Heart left ventricle (tissue), 16 donors: ENCODE measurements at regions of chr7 and their contacts with region 1.

Region 1: GRCh38 chr7:141654551-141654950 is 47.4 kb downstream of the DENND11 start:
- DNase-seq: peak in 3 of 5 donors; percentile 45 to 57 (median 52)
- ATAC-seq: peak; percentile 31 to 79 (median 65)
- H3K4me3 ChIP-seq: no peak overlapping the region
- H3K27ac ChIP-seq: peak overlapping the region in 1 of 12 donors; percentile 28
- H3K4me1 ChIP-seq: peaks cover 0 to 20% (median 7%) of the 10 kb centered on the region in 12 donors
- H3K27me3 ChIP-seq: no peaks in the 10 kb centered on the region
- CTCF ChIP-seq: peak; percentile 48 to 71 (median 60)
- POLR2A ChIP-seq: no peak

Region 2: DNA sequence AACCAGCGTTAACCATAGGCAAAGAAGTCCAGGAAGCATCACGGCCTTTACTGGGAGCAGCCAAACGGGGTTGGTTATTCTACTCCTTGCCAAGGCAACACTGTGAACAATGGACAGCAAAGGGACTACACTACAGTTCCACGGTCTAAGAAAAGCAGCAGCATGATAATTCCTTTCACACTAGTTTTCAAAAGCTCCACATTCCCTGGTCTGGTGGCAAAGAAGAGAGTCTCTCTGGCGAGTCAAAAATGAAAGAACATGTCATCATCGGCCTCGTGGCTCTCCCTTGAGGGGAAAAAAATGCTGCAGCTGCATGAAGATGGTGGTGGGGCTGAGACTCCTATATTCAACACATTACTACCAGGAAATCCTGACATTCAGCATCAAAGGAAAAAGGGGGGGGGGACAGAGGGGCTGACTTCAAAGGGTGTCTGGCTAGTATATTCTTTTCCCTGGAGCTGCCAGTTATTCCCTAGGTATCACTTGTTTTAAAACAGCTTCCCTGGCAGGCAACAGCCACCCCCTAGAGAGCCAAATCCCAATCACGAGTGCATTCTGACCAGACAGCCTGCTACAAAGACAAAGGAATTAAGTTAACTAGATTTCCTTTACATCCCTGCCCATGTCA is 1305.3 kb before region 1 on chr7:
- intact Hi-C with region 1: no loop called
- DNase-seq: no peak
- ATAC-seq: peak in 3 of 4 donors; percentile 38 to 74 (median 72)
- H3K4me3 ChIP-seq: peak overlapping the region in 6 of 12 donors; percentile 5 to 37 (median 15)
- H3K27ac ChIP-seq: peak overlapping the region in 9 of 12 donors; percentile 10 to 65 (median 54)
- H3K4me1 ChIP-seq: peaks cover 0 to 15% (median 11%) of the 10 kb centered on the region in 12 donors
- H3K27me3 ChIP-seq: no peaks in the 10 kb centered on the region
- CTCF ChIP-seq: peak in 1 of 12 donors; percentile 6
- POLR2A ChIP-seq: no peak

Region 3: GRCh38 chr7:141014524-141015395 is 639.8 kb before region 1 on chr7 and contains the start of gene MRPS33:
- intact Hi-C with region 1: loop called in 1 of 10 experiments (anchors 10 kb)
- DNase-seq: peak; percentile 95 to 98 (median 97)
- ATAC-seq: peak; percentile 99 to 100 (median 100)
- H3K4me3 ChIP-seq: peak within 1 kb of the TSS; percentile 47 to 87 (median 66)
- H3K27ac ChIP-seq: peak within 1 kb of the TSS; percentile 21 to 96 (median 90)
- H3K4me1 ChIP-seq: peaks cover 0 to 19% (median 12%) of the 10 kb centered on the region in 12 donors
- H3K27me3 ChIP-seq: peaks cover 0 to 5% (median 0%) of the 10 kb centered on the region in 9 donors
- CTCF ChIP-seq: peak in 10 of 12 donors; percentile 13 to 80 (median 52)
- POLR2A ChIP-seq: peak in 1 of 2 donors; percentile 64
- total RNA-seq, gene MRPS33: 43.7 to 137 (median 105) TPM

Region 4: DNA sequence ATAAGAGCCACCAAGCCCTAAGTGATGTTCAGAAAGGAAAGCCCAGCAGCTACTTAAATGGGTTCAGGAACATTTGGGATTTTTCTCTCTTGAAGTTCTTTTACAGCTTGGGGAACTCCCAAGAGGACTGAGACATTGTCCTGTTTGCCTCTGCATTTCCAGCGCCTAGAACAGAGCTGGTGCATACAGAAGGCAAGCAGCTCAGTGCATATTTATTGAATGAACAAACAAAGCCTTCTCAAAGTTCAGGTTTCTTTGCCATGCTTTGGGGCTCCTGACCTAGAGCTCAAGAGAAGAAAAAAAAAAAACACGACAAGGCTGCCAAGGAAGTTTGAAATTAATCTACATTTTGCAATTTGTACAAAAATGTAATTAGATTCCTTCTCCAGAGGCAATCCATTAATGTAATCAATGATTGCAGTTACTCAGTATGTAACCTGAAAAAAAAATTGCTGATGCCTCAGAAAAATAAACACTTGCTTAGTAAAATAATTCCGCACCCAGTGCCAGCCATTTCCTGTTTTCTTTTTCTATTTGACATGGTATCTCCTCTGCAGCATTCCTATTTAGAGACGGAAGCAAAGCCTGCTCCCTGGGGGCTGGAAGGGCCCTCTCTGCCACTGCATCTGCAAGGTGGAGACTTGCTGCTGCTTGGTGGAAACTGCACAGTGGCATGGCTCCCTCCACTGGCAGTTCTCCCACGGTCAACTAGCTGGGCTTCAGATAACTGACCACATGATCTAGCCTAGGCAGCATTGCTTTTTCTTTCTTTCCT is 423.3 kb before region 1 on chr7:
- intact Hi-C with region 1: loop called in 1 of 10 experiments (anchors 10 kb)
- DNase-seq: peak in 3 of 5 donors; percentile 25 to 47 (median 29)
- ATAC-seq: peak; percentile 61 to 86 (median 78)
- H3K4me3 ChIP-seq: no peak overlapping the region
- H3K27ac ChIP-seq: no peak overlapping the region
- H3K4me1 ChIP-seq: peaks cover 0 to 6% (median 0%) of the 10 kb centered on the region in 12 donors
- H3K27me3 ChIP-seq: no peaks in the 10 kb centered on the region
- CTCF ChIP-seq: peak in 11 of 12 donors; percentile 9 to 57 (median 31)
- POLR2A ChIP-seq: no peak

Region 5: DNA sequence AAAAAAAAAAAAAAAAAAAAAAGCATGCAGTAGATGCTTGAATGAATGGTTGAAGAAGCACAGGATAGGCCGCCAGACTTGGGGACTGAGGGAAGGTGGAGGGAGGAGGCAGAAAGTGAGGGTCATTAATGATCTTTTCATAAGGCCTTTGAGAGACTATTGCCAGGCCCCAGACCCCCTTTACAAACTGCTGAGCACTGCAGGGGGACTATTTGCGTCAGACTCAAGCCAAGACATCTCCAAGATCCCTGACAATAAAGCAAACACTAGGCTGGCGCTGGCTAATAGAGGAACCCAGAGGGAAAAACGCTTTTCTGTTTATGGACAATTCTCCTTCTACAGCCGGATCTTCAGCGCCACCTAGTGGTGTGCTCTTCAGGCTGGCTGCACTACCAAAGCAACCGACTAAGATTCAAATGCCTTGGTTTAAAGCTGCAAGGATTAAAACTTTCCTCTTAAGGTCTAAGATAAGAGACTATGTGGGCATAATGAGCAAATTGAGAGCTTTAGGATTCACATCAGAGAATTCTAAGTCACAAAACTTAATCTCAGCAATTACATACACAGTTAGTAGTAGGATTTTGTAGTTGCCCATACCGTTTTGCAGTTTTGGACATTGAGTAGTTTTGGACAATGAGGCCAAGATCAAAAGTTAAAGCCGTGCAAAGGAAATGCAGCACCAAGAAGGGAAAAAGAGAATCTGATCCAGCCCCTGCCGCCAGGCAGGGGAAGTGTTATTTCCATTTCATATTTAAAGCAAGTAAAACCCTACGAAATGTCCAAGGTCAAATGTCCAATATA is 121.2 kb before region 1 on chr7:
- intact Hi-C with region 1: loop called in 1 of 10 experiments (anchors 10 kb)
- DNase-seq: peak; percentile 43 to 76 (median 60)
- ATAC-seq: peak; percentile 81 to 90 (median 84)
- H3K4me3 ChIP-seq: no peak overlapping the region
- H3K27ac ChIP-seq: peak overlapping the region in 3 of 12 donors; percentile 1 to 28 (median 2)
- H3K4me1 ChIP-seq: peaks cover 0 to 14% (median 1%) of the 10 kb centered on the region in 12 donors
- H3K27me3 ChIP-seq: peaks cover 0 to 7% (median 0%) of the 10 kb centered on the region in 9 donors
- CTCF ChIP-seq: peak; percentile 88 to 98 (median 95)
- POLR2A ChIP-seq: no peak

Region 6: GRCh38 chr7:141551094-141551781 is 103.3 kb before region 1 on chr7 and contains the start of gene AGK:
- intact Hi-C with region 1: loop called in 5 of 10 experiments (anchors 10 kb)
- DNase-seq: peak; percentile 77 to 86 (median 79)
- ATAC-seq: peak; percentile 73 to 96 (median 95)
- H3K4me3 ChIP-seq: peak within 1 kb of the TSS; percentile 47 to 99 (median 94)
- H3K27ac ChIP-seq: peak within 1 kb of the TSS; percentile 30 to 87 (median 76)
- H3K4me1 ChIP-seq: peaks cover 0 to 27% (median 14%) of the 10 kb centered on the region in 12 donors
- H3K27me3 ChIP-seq: no peaks in the 10 kb centered on the region
- CTCF ChIP-seq: no peak
- POLR2A ChIP-seq: peak in 1 of 2 donors; percentile 42
- total RNA-seq, gene AGK: 30.6 to 49.8 (median 41.3) TPM

Region 7: DNA sequence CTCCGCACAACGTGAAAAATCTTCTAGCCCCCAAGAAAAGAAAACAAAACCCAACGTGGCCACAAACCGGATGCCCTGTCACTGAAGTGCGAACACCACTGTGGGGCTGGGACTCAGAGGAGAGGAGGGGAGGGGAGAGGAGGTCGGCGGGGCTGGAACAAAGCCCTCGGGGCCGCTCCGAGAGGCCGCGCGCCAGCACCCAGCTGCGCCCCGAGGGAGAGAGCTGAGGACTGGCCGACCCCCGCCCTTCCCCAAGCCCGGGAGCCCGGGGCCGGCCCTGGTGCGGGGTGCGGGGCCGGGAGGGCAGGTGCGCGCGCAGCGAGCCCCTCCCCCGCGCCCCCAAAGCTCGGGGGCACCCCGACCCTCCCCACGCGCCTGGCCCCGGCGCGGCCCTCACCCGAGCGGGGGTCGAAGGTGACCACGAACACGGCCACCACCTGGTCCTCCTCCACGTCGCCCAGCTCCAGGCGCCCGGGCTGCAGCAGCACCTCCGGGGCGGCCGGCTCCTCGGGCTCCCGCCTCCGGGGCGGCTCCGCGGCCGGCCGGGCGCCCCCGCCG is 47.0 kb after region 1 on chr7:
- intact Hi-C with region 1: loop called in 2 of 10 experiments (anchors 5 kb)
- DNase-seq: peak; percentile 38 to 67 (median 50)
- ATAC-seq: peak; percentile 50 to 69 (median 66)
- H3K4me3 ChIP-seq: peak overlapping the region; percentile 65 to 98 (median 82)
- H3K27ac ChIP-seq: peak overlapping the region; percentile 47 to 90 (median 86)
- H3K4me1 ChIP-seq: peaks cover 0 to 50% (median 23%) of the 10 kb centered on the region in 12 donors
- H3K27me3 ChIP-seq: no peaks in the 10 kb centered on the region
- CTCF ChIP-seq: no peak
- POLR2A ChIP-seq: no peak

Region 8: GRCh38 chr7:141763797-141764196 is 109.2 kb after region 1 on chr7 and contains the start of gene TAS2R3:
- intact Hi-C with region 1: no loop called
- DNase-seq: no peak
- ATAC-seq: no peak
- H3K4me3 ChIP-seq: no peak within 1 kb of the TSS
- H3K27ac ChIP-seq: no peak within 1 kb of the TSS
- H3K4me1 ChIP-seq: no peaks in the 10 kb centered on the region
- H3K27me3 ChIP-seq: no peaks in the 10 kb centered on the region
- CTCF ChIP-seq: no peak
- POLR2A ChIP-seq: no peak
- total RNA-seq, gene TAS2R3: 0.25 to 1.2 (median 0.58) TPM in 6 of 9 donors, not detected in the others

Region 9: GRCh38 chr7:141785706-141786552 is 131.4 kb after region 1 on chr7:
- intact Hi-C with region 1: loop called in 3 of 10 experiments (anchors 5 kb)
- DNase-seq: no peak
- ATAC-seq: peak in 2 of 4 donors; percentile 10 to 39
- H3K4me3 ChIP-seq: no peak overlapping the region
- H3K27ac ChIP-seq: no peak overlapping the region
- H3K4me1 ChIP-seq: peaks cover 0 to 3% (median 0%) of the 10 kb centered on the region in 12 donors
- H3K27me3 ChIP-seq: no peaks in the 10 kb centered on the region
- CTCF ChIP-seq: peak; percentile 55 to 78 (median 70)
- POLR2A ChIP-seq: no peak

Region 10: GRCh38 chr7:142916508-142916907 is 1262.0 kb after region 1 on chr7:
- intact Hi-C with region 1: no loop called
- DNase-seq: no peak
- ATAC-seq: no peak
- H3K4me3 ChIP-seq: no peak overlapping the region
- H3K27ac ChIP-seq: no peak overlapping the region
- H3K4me1 ChIP-seq: peaks cover 0 to 2% (median 0%) of the 10 kb centered on the region in 12 donors
- H3K27me3 ChIP-seq: peaks cover 0 to 12% (median 0%) of the 10 kb centered on the region in 9 donors
- CTCF ChIP-seq: no peak
- POLR2A ChIP-seq: no peak